WTC11 (cell line): ENCODE measurements at regions of chr5 and their contacts with region 1.

Region 1: GRCh38 chr5:170070556-170071412 is 34.9 kb upstream of the FOXI1 start:
- DNase-seq: peak; percentile 83
- ATAC-seq: peak; percentile 95
- H3K4me3 Mint-ChIP-seq: no peak overlapping the region
- H3K27ac Mint-ChIP-seq: no peak overlapping the region
- H3K4me1 Mint-ChIP-seq: peaks cover 17% of the 10 kb centered on the region
- H3K27me3 Mint-ChIP-seq: no peaks in the 10 kb centered on the region; the same call in 1 of the 2 replicates
- CTCF ChIP-seq: peak; percentile 91

Region 2: DNA sequence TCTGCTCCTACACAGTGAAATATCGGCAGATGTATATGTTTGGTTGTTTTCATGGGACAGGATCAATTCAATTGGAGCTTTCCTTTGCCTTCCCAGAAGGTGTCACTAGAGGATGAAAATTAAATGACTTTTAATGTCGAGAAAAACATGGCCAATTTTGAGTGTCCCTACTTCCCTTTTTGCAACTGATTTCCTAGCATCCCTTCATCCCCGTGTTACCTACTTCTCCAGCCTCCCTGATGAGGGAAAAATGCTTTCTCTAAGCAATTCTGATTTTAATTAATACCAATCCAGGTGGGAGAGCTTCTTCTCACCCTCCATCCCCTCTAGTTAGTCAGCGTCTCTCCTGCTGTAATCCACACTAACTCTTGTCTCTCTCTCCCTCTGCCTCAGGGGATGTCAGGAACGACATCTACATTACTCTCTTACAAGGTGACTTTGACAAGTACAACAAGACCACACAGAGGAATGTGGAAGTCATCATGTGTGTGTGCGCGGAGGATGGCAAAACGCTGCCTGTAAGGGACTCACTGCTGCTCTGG is 368.8 kb before region 1 on chr5:
- CTCF ChIA-PET with region 1: interaction called, 14 read pairs
- POLR2A ChIA-PET with region 1: no interaction called
- DNase-seq: no peak
- ATAC-seq: peak; percentile 70
- H3K4me3 Mint-ChIP-seq: no peak overlapping the region
- H3K27ac Mint-ChIP-seq: no peak overlapping the region
- H3K4me1 Mint-ChIP-seq: peaks cover 10% of the 10 kb centered on the region
- H3K27me3 Mint-ChIP-seq: no peaks in the 10 kb centered on the region
- CTCF ChIP-seq: no peak

Region 3: GRCh38 chr5:169988947-169989346 is 81.8 kb before region 1 on chr5:
- CTCF ChIA-PET with region 1: no interaction called
- POLR2A ChIA-PET with region 1: no interaction called
- DNase-seq: no peak
- ATAC-seq: no peak
- H3K4me3 Mint-ChIP-seq: no peak overlapping the region
- H3K27ac Mint-ChIP-seq: no peak overlapping the region
- H3K4me1 Mint-ChIP-seq: 0 out of 2 replicates have a peak, but pooled peaks cover 3% of the 10 kb centered on the region
- H3K27me3 Mint-ChIP-seq: no peaks in the 10 kb centered on the region
- CTCF ChIP-seq: no peak

Region 4: GRCh38 chr5:170082701-170083100 is 11.9 kb after region 1 on chr5:
- CTCF ChIA-PET with region 1: interaction called, 21 read pairs
- POLR2A ChIA-PET with region 1: no interaction called
- DNase-seq: no peak
- ATAC-seq: no peak
- H3K4me3 Mint-ChIP-seq: no peak overlapping the region
- H3K27ac Mint-ChIP-seq: no peak overlapping the region
- H3K4me1 Mint-ChIP-seq: no peaks in the 10 kb centered on the region
- H3K27me3 Mint-ChIP-seq: no peaks in the 10 kb centered on the region
- CTCF ChIP-seq: no peak

Region 5: DNA sequence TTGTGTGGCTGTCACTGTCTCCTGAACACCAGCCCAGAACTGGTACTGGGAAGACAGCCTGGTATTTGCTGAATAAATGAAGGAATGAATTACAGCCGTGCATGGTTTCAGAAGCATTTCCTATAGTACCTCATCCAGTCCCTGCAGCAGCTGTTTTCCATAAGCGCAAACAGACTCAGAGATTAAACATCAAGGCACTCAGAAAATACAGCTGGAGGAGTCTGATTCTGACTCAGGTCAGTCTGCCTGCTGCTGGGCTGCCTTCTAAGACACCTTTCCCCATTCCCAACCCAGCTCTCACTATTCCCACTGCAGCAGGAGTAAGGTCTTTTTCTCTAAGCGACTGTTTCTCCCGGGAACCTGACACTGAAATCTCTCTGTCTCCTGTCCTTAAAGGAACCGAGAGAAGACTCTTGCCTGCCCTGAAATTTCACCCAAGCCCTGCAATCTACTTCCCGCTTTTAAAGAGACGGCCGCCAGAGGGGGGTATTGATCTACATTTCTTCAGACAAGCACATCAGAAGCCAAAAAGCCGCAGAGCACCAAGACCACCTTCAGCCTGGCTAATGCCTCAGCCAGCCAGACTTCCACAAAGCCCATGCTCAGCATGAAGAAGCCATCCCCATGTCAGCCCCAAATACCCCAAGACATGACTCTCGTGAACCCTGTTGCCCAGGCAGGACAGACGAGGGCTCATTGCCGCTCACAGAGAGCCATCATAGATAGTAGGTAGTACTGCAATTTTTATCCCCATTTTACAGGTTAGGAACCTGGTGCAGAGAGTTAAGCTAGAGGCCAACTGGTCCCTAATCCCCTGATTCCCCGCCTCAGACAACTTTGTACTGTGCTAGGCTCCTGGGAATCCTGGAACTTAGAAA is 29.5 kb after region 1 on chr5:
- CTCF ChIA-PET with region 1: interaction called, 16 read pairs
- POLR2A ChIA-PET with region 1: no interaction called
- DNase-seq: peak; percentile 90
- ATAC-seq: peak; percentile 89
- H3K4me3 Mint-ChIP-seq: no peak overlapping the region
- H3K27ac Mint-ChIP-seq: no peak overlapping the region
- H3K4me1 Mint-ChIP-seq: peaks cover 8% of the 10 kb centered on the region
- H3K27me3 Mint-ChIP-seq: peaks cover 5% of the 10 kb centered on the region; the same call in 1 of the 2 replicates
- CTCF ChIP-seq: peak; percentile 68